ENCODE measurements at regions of chr15 and their contacts with region 1.

Region 1: GRCh38 chr15:73114064-73114463 is 61.8 kb downstream of the NEO1 start:
- DNase-seq: no peak
- ATAC-seq: no peak
- H3K4me3 ChIP-seq: no peak overlapping the region
- H3K27ac ChIP-seq: no peak overlapping the region
- H3K4me1 ChIP-seq: no peaks in the 10 kb centered on the region
- H3K27me3 ChIP-seq: no peaks in the 10 kb centered on the region
- CTCF ChIP-seq: no peak
- POLR2A ChIP-seq: no peak
- RAD21 ChIP-seq: no peak

Region 2: GRCh38 chr15:73034221-73034620 is 79.8 kb before region 1 on chr15:
- CTCF ChIA-PET with region 1: no interaction called
- POLR2A ChIA-PET with region 1: no interaction called
- dilution Hi-C with region 1: no loop called
- in situ Hi-C with region 1: no loop called
- intact Hi-C with region 1: no loop called
- DNase-seq: no peak
- ATAC-seq: no peak
- H3K4me3 ChIP-seq: no peak overlapping the region
- H3K27ac ChIP-seq: no peak overlapping the region
- H3K4me1 ChIP-seq: peaks cover 4% of the 10 kb centered on the region
- H3K27me3 ChIP-seq: peaks cover 22% of the 10 kb centered on the region
- CTCF ChIP-seq: no peak
- POLR2A ChIP-seq: no peak
- RAD21 ChIP-seq: no peak

Region 3: GRCh38 chr15:73174171-73174570 is 60.1 kb after region 1 on chr15:
- CTCF ChIA-PET with region 1: no interaction called
- POLR2A ChIA-PET with region 1: no interaction called
- dilution Hi-C with region 1: no loop called
- in situ Hi-C with region 1: loop called (anchors 10 kb)
- intact Hi-C with region 1: no loop called
- DNase-seq: no peak
- ATAC-seq: no peak
- H3K4me3 ChIP-seq: no peak overlapping the region
- H3K27ac ChIP-seq: no peak overlapping the region
- H3K4me1 ChIP-seq: peaks cover 2% of the 10 kb centered on the region
- H3K27me3 ChIP-seq: no peaks in the 10 kb centered on the region
- CTCF ChIP-seq: no peak
- POLR2A ChIP-seq: no peak
- RAD21 ChIP-seq: no peak